ENCODE measurements at regions of chr16 and their contacts with region 1.

Region 1: DNA sequence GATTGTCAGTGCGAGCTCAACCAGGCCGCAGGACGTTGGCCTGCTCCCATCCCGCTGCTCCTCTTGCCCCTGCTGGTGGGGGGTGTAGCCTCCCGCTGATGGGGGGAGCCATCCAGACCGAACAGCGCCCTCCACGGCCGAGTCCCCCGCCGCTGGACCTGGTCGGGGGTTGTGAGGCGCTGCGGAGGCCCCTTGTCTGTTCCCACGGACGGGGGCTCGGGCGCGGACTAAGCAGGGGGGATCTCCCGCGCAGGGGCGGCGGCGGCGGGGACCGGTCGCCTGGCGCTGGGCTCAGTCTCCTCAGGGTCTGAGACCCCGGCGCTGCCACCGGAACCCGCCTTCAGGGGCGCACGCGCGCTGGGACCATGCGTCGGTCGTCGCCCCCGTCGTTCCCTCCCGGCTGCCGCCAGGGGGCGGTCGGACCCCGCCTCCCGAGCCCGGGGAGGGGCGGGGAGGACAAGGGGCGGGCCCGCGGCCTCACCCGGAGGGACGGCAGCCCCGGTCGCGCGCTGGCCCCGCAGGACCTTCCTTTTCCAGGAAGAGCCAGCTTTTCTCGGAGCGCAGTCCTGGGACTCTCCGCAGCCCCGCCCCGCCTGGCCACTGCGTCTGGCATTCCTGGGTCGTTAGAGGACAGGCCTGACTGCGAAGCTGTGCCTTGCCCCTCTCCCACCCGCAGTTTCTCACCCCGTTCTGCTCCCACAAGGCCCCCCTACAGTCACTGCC is 6.3 kb upstream of the IL32 start:
- DNase-seq: peak; percentile 94 to 95
- H3K4me3 ChIP-seq: peak overlapping the region; percentile 91
- H3K4me3 Mint-ChIP-seq: peak overlapping the region; percentile 81
- H3K27ac Mint-ChIP-seq: peak overlapping the region; percentile 90
- H3K4me1 ChIP-seq: peaks cover 15% of the 10 kb centered on the region
- H3K4me1 Mint-ChIP-seq: no peaks in the 10 kb centered on the region
- H3K27me3 ChIP-seq: no peaks in the 10 kb centered on the region
- H3K27me3 Mint-ChIP-seq: no peaks in the 10 kb centered on the region
- CTCF ChIP-seq: peak; percentile 70 to 93

Region 2: GRCh38 chr16:3003582-3004302 is 55.4 kb before region 1 on chr16:
- CTCF ChIA-PET with region 1: interaction called, 6 read pairs
- POLR2A ChIA-PET with region 1: interaction called, 11 read pairs
- intact Hi-C with region 1: no loop called
- DNase-seq: peak; percentile 98 to 99
- H3K4me3 ChIP-seq: peak overlapping the region; percentile 52
- H3K4me3 Mint-ChIP-seq: peak overlapping the region; percentile 89
- H3K27ac Mint-ChIP-seq: no peak overlapping the region
- H3K4me1 ChIP-seq: peaks cover 35% of the 10 kb centered on the region
- H3K4me1 Mint-ChIP-seq: peaks cover 18% of the 10 kb centered on the region
- H3K27me3 ChIP-seq: no peaks in the 10 kb centered on the region
- H3K27me3 Mint-ChIP-seq: no peaks in the 10 kb centered on the region
- CTCF ChIP-seq: peak; percentile 42 to 80

Region 3: GRCh38 chr16:3029537-3030402 is 29.4 kb before region 1 on chr16:
- CTCF ChIA-PET with region 1: interaction called, 18 read pairs
- POLR2A ChIA-PET with region 1: no interaction called
- intact Hi-C with region 1: no loop called
- DNase-seq: no peak
- H3K4me3 ChIP-seq: no peak overlapping the region
- H3K4me3 Mint-ChIP-seq: peak overlapping the region; percentile 12
- H3K27ac Mint-ChIP-seq: peak overlapping the region; percentile 57
- H3K4me1 ChIP-seq: peaks cover 7% of the 10 kb centered on the region
- H3K4me1 Mint-ChIP-seq: peaks cover 7% of the 10 kb centered on the region
- H3K27me3 ChIP-seq: no peaks in the 10 kb centered on the region
- H3K27me3 Mint-ChIP-seq: no peaks in the 10 kb centered on the region
- CTCF ChIP-seq: no peak

Region 4: GRCh38 chr16:3074860-3075522 is 15.8 kb after region 1 on chr16:
- CTCF ChIA-PET with region 1: no interaction called
- POLR2A ChIA-PET with region 1: no interaction called
- intact Hi-C with region 1: no loop called
- DNase-seq: no peak
- H3K4me3 ChIP-seq: no peak overlapping the region
- H3K4me3 Mint-ChIP-seq: no peak overlapping the region
- H3K27ac Mint-ChIP-seq: no peak overlapping the region
- H3K4me1 ChIP-seq: no peaks in the 10 kb centered on the region
- H3K4me1 Mint-ChIP-seq: peaks cover 9% of the 10 kb centered on the region
- H3K27me3 ChIP-seq: no peaks in the 10 kb centered on the region
- H3K27me3 Mint-ChIP-seq: peaks cover 12% of the 10 kb centered on the region
- CTCF ChIP-seq: no peak

Region 5: GRCh38 chr16:3106205-3106928 is 47.2 kb after region 1 on chr16:
- CTCF ChIA-PET with region 1: interaction called, 6 read pairs
- POLR2A ChIA-PET with region 1: interaction called, 3 read pairs
- intact Hi-C with region 1: loop called (anchors 2 kb)
- DNase-seq: peak; percentile 94
- H3K4me3 ChIP-seq: peak overlapping the region; percentile 90
- H3K4me3 Mint-ChIP-seq: peak overlapping the region; percentile 71
- H3K27ac Mint-ChIP-seq: peak overlapping the region; percentile 84
- H3K4me1 ChIP-seq: peaks cover 3% of the 10 kb centered on the region; the same call in 1 of the 2 replicates
- H3K4me1 Mint-ChIP-seq: peaks cover 6% of the 10 kb centered on the region
- H3K27me3 ChIP-seq: no peaks in the 10 kb centered on the region
- H3K27me3 Mint-ChIP-seq: no peaks in the 10 kb centered on the region
- CTCF ChIP-seq: no peak

Region 6: DNA sequence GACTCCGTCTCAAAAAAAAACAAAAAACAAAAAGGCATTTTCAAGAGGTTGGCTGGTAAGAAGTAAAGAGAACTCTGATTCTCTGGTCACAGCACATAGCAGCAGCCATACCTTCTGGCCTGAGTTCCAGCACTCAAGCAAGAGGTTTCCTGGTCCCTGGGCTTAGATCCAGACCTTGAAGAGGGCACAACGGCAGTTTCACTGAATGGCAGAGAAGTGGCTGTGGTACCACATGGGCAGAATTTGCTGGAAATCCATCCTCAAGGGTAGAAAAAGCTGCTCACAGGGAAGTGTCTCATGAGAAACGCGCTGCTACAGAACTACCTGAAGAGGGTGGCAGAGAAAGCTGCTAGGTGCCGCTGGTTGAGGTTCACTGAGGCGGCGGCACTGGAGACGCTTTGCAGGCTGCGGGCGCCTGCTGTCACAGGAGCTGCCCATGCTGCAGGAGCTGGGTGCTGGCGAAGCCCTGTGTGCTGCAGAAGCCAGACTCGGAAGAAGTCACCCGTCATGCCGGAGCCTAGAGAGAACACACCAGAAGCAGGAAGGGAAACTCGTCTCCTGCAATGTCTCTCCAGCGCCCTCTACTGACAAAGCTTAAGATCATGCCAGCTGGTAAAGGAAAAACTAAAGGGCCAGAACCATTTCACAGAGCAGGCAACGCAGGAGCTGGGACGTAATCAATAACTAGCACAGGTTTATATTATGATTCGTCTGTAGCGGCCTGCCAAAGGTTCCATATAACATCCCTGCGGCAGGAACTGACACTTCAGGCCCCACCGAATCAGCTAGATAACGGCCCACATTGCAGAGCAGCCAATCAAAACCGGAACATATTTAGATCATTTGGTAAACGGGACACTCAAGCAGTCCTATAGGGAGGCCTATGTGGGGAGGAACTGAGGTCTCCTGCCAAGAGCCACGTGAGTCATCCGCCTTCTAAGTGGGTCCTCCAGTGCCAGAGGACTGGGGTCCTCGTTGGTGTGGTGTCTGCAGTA is 70.3 kb after region 1 on chr16:
- CTCF ChIA-PET with region 1: interaction called, 44 read pairs
- POLR2A ChIA-PET with region 1: interaction called, 5 read pairs
- intact Hi-C with region 1: loop called (anchors 1 kb)
- DNase-seq: peak; percentile 74 to 81
- H3K4me3 ChIP-seq: peak overlapping the region; percentile 36
- H3K4me3 Mint-ChIP-seq: peak overlapping the region; percentile 81
- H3K27ac Mint-ChIP-seq: peak overlapping the region; percentile 25
- H3K4me1 ChIP-seq: no peaks in the 10 kb centered on the region
- H3K4me1 Mint-ChIP-seq: peaks cover 15% of the 10 kb centered on the region
- H3K27me3 ChIP-seq: no peaks in the 10 kb centered on the region
- H3K27me3 Mint-ChIP-seq: no peaks in the 10 kb centered on the region
- CTCF ChIP-seq: peak; percentile 72 to 84

Region 7: DNA sequence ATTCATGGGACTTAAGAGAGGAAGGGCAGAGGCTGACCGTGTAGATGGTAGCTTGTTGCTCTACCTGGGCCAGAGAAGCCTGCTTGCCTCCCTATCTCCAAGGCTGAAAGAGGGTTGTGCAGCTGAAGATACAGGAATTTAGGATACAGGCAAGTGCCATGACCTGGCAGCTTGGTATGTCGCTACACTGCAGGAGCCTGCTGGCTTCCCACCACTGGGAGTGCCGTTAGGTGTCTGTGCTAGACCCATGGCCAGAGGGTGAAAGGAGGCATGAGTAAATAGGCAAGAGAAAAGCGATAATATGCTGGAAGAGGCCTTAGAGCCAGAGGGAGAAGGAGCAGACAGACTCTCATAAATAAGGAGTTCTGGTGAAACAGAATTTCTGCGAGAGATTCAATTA is 394.9 kb after region 1 on chr16:
- CTCF ChIA-PET with region 1: no interaction called
- POLR2A ChIA-PET with region 1: no interaction called
- intact Hi-C with region 1: no loop called
- DNase-seq: peak in 1 of 2 experiments; percentile 42
- H3K4me3 ChIP-seq: no peak overlapping the region
- H3K4me3 Mint-ChIP-seq: no peak overlapping the region
- H3K27ac Mint-ChIP-seq: no peak overlapping the region
- H3K4me1 ChIP-seq: no peaks in the 10 kb centered on the region
- H3K4me1 Mint-ChIP-seq: peaks cover 13% of the 10 kb centered on the region
- H3K27me3 ChIP-seq: no peaks in the 10 kb centered on the region
- H3K27me3 Mint-ChIP-seq: no peaks in the 10 kb centered on the region
- CTCF ChIP-seq: no peak

Measured in Caco-2 (cell line).